A549 (cell line): ENCODE measurements at regions of chr7 and their contacts with region 1.

Region 1: DNA sequence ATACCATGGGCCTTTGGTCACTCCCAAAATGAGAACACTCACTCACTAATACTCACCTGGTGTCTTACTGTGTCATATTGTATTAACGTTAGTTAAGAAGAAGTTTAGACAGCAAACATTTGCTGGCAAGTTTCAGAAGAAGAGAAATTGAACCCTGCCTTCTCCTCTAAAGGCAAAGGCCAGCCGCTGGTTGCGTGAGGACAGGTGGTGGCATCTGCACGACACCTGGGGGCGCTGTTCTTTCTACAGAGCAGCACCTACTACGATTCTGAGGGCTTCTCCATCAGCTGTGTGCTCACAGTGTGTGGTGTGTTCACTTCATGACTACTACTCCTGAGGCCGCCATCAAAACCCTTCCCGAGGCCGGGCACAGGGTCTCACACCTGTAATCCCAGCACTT is 17.9 kb upstream of the CLEC2L start:
- DNase-seq: peak in 1 of 2 experiments; percentile 44
- ATAC-seq: peak; percentile 54 to 82; a peak in 4 of 6 replicates
- H3K4me3 ChIP-seq: no peak overlapping the region
- H3K27ac ChIP-seq: no peak overlapping the region
- H3K4me1 ChIP-seq: no peaks in the 10 kb centered on the region
- CTCF ChIP-seq: peak; percentile 23; the same call in 2 of the 3 replicates
- EP300 ChIP-seq: no peak
- POLR2A ChIP-seq: no peak
- RAD21 ChIP-seq: 0 out of 5 replicates have a peak, but pooled peaks of 1 of the 2 experiments have one; percentile 11

Region 2: DNA sequence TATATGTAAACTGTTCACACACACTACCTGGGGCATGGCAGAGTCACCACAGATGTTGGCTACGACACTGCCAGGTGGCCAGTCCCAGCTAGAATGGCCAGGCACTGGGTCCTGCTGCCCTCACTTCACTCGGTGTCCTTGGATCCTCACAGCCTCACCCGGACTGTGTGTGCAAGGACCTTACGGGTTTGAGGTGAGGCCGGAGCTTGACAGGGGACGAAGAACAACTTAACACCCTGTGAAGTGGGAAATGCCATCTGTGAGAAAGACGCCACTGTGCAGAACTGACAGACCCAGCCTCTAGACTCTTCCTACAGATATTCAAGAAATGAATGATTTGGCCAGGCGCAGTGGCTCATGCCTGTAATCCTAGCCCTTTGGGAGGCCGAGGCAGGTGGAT is 68.8 kb before region 1 on chr7:
- CTCF ChIA-PET with region 1: interaction called, 21 read pairs
- POLR2A ChIA-PET with region 1: no interaction called
- DNase-seq: no peak
- ATAC-seq: no peak
- H3K4me3 ChIP-seq: no peak overlapping the region
- H3K27ac ChIP-seq: no peak overlapping the region
- H3K4me1 ChIP-seq: no peaks in the 10 kb centered on the region
- CTCF ChIP-seq: no peak
- EP300 ChIP-seq: no peak
- POLR2A ChIP-seq: no peak
- RAD21 ChIP-seq: no peak

Region 3: GRCh38 chr7:139490133-139490532 is 15.4 kb before region 1 on chr7:
- CTCF ChIA-PET with region 1: interaction called, 11 read pairs
- POLR2A ChIA-PET with region 1: no interaction called
- DNase-seq: no peak
- ATAC-seq: no peak
- H3K4me3 ChIP-seq: no peak overlapping the region
- H3K27ac ChIP-seq: no peak overlapping the region
- H3K4me1 ChIP-seq: no peaks in the 10 kb centered on the region
- CTCF ChIP-seq: no peak
- EP300 ChIP-seq: no peak
- POLR2A ChIP-seq: no peak
- RAD21 ChIP-seq: no peak

Region 4: GRCh38 chr7:139557857-139558581 is 52.5 kb after region 1 on chr7:
- CTCF ChIA-PET with region 1: interaction called, 13 read pairs
- POLR2A ChIA-PET with region 1: no interaction called
- DNase-seq: no peak
- ATAC-seq: peak; percentile 23 to 36; a peak in 2 of 6 replicates
- H3K4me3 ChIP-seq: no peak overlapping the region
- H3K27ac ChIP-seq: no peak overlapping the region
- H3K4me1 ChIP-seq: no peaks in the 10 kb centered on the region
- CTCF ChIP-seq: no peak
- EP300 ChIP-seq: no peak
- POLR2A ChIP-seq: no peak
- RAD21 ChIP-seq: no peak

Region 5: GRCh38 chr7:139570119-139570518 is 64.6 kb after region 1 on chr7:
- CTCF ChIA-PET with region 1: interaction called, 18 read pairs
- POLR2A ChIA-PET with region 1: no interaction called
- DNase-seq: no peak
- ATAC-seq: no peak
- H3K4me3 ChIP-seq: no peak overlapping the region
- H3K27ac ChIP-seq: no peak overlapping the region
- H3K4me1 ChIP-seq: no peaks in the 10 kb centered on the region
- CTCF ChIP-seq: peak; percentile 10; the same call in 1 of the 3 replicates
- EP300 ChIP-seq: no peak
- POLR2A ChIP-seq: no peak
- RAD21 ChIP-seq: 0 out of 5 replicates have a peak, but pooled peaks of 1 of the 2 experiments have one; percentile 12

Region 6: DNA sequence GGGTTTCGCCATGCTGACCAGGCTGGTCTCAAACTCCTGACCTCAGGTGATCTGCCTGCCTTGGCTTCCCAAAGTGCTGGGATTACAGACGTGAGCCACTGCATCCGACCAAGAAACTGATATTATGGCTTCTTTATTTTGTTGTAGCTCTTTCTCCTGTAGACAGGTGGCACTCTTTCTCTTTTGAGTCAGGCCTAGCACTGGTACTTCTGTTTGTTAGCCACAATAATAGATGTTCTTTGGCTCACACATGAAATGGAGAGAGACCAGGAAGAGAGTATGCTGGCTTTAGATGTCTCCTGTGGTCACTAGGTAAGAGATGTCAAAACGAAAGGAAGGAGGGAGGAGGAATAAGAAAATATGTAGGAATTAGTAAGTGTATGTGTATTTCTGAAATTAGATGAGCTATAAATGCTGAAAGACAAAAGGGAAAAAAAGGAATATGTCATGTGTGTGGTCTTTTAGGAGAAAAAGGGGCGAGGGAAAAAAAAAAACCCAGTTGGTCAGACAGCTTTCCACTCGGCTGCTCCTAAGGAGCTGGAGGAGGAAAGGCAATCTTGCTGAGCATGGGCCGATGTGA is 96.7 kb after region 1 on chr7:
- CTCF ChIA-PET with region 1: interaction called, 21 read pairs
- POLR2A ChIA-PET with region 1: no interaction called
- DNase-seq: peak; percentile 45 to 56
- ATAC-seq: peak; percentile 86 to 94; a peak in 5 of 6 replicates
- H3K4me3 ChIP-seq: no peak overlapping the region
- H3K27ac ChIP-seq: no peak overlapping the region
- H3K4me1 ChIP-seq: no peaks in the 10 kb centered on the region
- CTCF ChIP-seq: peak; percentile 69
- EP300 ChIP-seq: no peak
- POLR2A ChIP-seq: no peak
- RAD21 ChIP-seq: peak; percentile 59 to 68; a peak in 4 of 5 replicates

Region 7: DNA sequence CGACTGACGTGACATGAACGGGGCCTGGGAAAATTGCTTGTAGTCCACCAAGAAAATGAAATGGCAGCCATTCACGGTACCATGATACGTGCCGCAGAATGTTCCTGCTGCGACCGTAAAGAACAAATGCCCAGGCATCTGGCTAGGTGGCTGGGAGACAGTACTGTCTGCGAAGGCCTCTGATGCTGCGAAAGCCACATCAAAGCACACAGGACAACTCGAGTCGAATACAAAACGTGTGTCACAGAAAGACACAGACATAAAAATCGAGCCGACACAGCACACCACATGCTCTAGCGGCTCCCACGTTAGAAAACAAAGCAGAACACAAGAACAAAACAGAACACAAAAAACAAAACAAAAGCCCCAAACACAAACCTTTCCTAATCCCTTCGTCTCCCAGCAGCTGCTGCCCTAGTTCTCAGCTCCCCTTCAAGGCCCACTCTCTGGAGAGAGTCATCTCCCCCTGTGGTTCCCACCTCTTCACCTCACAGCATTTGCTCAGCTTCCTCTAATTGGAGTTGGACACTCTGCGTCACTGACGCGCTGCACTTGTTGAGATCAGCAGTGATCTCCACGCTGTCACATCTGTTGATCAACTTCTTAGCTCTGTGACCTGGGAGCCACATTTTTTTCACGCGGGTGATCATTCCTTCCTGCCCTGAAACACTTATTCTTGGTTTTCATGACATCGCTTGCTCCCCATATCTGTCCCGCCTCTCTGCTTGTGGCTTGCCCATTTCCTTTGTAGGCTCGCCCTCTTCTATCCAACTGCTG is 130.2 kb after region 1 on chr7:
- CTCF ChIA-PET with region 1: no interaction called
- POLR2A ChIA-PET with region 1: no interaction called
- DNase-seq: no peak
- ATAC-seq: no peak
- H3K4me3 ChIP-seq: no peak overlapping the region
- H3K27ac ChIP-seq: no peak overlapping the region
- H3K4me1 ChIP-seq: no peaks in the 10 kb centered on the region
- CTCF ChIP-seq: no peak
- EP300 ChIP-seq: no peak
- POLR2A ChIP-seq: no peak
- RAD21 ChIP-seq: no peak